Sigmoid colon (tissue), 7 donors: ENCODE measurements at regions of chr12 and their contacts with region 1.

Region 1: GRCh38 chr12:104137913-104138796 is at the start of gene NFYB:
- DNase-seq: peak; percentile 99
- H3K4me3 ChIP-seq: peak within 1 kb of the TSS; percentile 74 to 85 (median 84)
- H3K27ac ChIP-seq: peak within 1 kb of the TSS; percentile 95 to 98 (median 98)
- H3K4me1 ChIP-seq: peaks cover 2 to 49% (median 46%) of the 10 kb centered on the region in 4 donors
- H3K27me3 ChIP-seq: no peaks in the 10 kb centered on the region
- CTCF ChIP-seq: no peak
- EP300 ChIP-seq: no peak
- POLR2A ChIP-seq: peak; percentile 27 to 39
- total RNA-seq, gene NFYB: 75.2 to 91.3 (median 81.9) TPM

Region 2: DNA sequence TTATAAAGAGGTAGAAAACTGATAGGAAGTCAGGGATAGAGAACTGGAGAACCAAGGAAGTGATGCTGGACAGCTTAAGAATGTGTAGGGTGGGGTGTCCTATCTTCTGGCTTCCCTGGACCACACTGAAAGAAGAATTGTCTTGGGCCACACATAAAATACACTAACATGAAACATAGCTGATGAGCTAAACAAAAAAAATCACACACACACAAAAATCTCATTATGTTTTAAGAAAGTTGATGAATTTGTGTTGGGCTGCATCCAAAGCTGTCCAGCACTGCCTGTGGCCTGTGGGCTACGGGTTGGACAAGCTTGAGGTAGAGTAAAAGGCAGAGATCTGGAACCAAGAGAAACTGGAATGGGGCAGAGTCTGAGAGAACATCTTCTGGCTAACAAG is 95.6 kb before region 1 on chr12:
- intact Hi-C with region 1: no loop called
- DNase-seq: no peak
- H3K4me3 ChIP-seq: no peak overlapping the region
- H3K27ac ChIP-seq: no peak overlapping the region
- H3K4me1 ChIP-seq: peaks cover 0 to 25% (median 20%) of the 10 kb centered on the region in 4 donors
- H3K27me3 ChIP-seq: no peaks in the 10 kb centered on the region
- CTCF ChIP-seq: no peak
- EP300 ChIP-seq: no peak
- POLR2A ChIP-seq: no peak

Region 3: DNA sequence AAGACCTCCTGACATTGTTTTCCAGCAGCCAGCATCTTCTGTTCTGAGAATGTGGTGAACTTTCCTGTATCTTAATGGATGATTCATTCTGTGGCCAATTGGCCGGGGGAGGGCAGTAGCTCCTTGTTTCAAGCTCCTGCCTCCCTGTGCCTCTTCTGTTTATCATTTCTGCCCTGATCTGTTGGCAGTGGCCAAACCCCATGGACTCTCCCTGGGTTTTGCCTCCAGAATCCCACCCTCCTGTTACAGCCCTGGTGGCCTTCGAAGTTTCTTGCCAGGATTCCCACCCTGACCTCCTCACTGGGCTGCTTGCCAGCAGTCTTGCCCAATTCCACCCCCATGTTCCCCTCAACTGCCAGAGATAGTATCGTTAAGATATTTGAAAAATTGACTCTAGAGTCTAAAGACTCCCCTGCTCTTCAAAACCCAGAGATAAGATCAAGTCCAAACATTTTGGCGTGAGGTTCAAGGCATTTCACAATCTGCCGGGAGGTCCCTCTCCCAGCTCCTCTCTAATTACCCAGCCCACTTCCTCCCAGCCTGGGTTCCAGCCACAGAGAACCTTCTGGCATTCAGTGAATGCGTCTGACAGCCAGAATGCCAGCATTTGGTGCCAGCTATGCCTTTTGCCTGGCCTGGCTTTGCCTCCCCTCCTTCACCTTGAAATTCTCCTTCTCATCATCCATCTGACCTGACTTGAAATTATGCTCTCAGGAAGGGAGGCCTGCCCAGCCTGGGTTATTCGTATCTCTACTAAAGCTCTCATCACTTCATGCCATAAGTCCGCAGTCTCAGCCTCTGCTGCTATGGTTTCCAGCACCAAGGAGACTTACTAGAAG is 39.7 kb after region 1 on chr12:
- intact Hi-C with region 1: loop called (anchors 2 kb)
- DNase-seq: peak; percentile 97
- H3K4me3 ChIP-seq: no peak overlapping the region
- H3K27ac ChIP-seq: peak overlapping the region; percentile 83 to 91 (median 89)
- H3K4me1 ChIP-seq: peaks cover 0 to 70% (median 67%) of the 10 kb centered on the region in 4 donors
- H3K27me3 ChIP-seq: no peaks in the 10 kb centered on the region
- CTCF ChIP-seq: peak in 1 of 4 experiments; percentile 23
- EP300 ChIP-seq: peak in 2 of 4 donors; percentile 97 to 99
- POLR2A ChIP-seq: no peak